HAP-1 (cell line): ENCODE measurements at regions of chr4 and their contacts with region 1.

Region 1: GRCh38 chr4:108018040-108018883 is 28.6 kb downstream of the HADH start:
- DNase-seq: peak; percentile 54 to 87
- H3K4me3 ChIP-seq: no peak overlapping the region
- H3K4me1 ChIP-seq: no peaks in the 10 kb centered on the region
- H3K27me3 ChIP-seq: no peaks in the 10 kb centered on the region

Region 2: DNA sequence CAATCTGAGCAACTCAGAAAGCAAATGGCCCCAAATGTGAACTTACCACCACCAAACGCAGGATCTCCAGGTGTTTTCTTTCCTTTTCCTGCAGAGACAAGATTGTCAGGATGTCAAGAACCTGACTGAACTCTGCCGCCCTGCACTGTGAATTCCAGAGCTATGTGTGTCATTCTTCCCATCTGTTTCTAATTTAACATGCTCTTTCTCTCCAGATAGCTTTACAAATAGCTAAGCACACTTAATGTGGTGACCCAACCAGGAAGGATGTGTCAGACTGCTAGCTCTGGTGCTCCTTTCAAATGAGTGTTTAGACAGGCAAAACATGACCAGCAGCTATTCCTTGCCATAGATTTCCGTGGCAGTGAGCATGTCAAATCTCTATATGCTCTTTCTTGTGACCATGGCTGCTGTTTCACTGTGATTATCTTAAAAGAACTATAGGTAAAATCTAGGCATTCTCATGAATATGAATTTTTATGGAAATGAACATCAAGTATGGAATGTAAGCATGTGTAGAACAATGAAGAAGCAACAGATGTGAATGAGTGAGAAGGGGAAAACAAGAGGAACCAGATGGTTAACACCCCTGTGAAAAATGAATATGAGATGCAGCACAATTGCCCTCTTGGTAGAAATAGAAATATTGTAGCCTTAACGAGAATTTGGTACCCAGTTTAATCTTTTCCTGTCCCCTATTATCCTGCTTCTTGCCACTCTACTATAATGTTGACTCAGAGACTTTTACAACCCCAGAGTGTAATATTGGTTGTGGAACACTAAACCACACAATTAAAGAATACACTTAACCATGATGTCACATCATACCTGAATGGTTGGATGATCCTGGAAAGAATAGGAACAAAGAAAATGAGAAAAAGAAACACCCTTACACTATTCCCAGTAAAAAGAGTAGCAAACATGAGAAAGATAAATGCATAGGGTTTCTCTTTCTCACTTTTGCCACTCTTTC is 734.4 kb before region 1 on chr4:
- in situ Hi-C with region 1: no loop called
- DNase-seq: no peak
- H3K4me3 ChIP-seq: no peak overlapping the region
- H3K4me1 ChIP-seq: no peaks in the 10 kb centered on the region; the same call in 1 of the 2 replicates
- H3K27me3 ChIP-seq: peaks cover 3% of the 10 kb centered on the region; the same call in 1 of the 2 replicates

Region 3: GRCh38 chr4:108483079-108483478 is 464.8 kb after region 1 on chr4:
- in situ Hi-C with region 1: loop called (anchors 10 kb)
- DNase-seq: no peak
- H3K4me3 ChIP-seq: no peak overlapping the region
- H3K4me1 ChIP-seq: no peaks in the 10 kb centered on the region
- H3K27me3 ChIP-seq: no peaks in the 10 kb centered on the region

Region 4: DNA sequence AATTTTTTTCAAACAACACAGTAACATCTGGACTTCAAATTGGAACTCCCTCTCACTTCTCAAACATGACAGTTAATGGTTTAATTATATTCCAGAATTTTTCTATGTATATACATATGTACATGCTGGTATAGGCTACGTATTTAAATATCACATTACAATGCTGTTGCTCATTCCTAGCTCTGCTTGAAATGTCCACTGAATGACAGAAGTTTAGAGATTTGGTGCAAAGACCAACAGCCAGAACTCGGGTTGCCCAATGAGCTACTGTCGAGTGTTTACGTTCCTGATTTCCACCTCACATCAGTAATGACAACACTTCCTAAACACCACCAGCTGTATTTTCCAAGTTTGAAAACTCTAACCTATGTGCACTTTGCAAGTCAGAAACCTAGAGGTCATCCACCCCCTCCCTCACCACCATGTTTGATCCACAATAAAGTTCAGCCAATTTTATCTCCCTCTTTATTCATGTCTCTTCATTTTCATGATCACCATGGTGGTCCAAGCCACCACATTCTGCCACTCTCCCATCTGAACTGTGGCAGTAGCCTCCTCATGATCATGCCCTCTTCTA is 552.8 kb after region 1 on chr4:
- in situ Hi-C with region 1: loop called (anchors 5 kb)
- DNase-seq: no peak
- H3K4me3 ChIP-seq: no peak overlapping the region
- H3K4me1 ChIP-seq: peaks cover 3% of the 10 kb centered on the region; the same call in 1 of the 2 replicates
- H3K27me3 ChIP-seq: peaks cover 17% of the 10 kb centered on the region